ENCODE measurements at regions of chr20 and their contacts with region 1.

Region 1: GRCh38 chr20:16469395-16469905 is 103.8 kb downstream of the KIF16B start:
- DNase-seq: no peak
- H3K4me3 ChIP-seq: no peak overlapping the region
- H3K27ac ChIP-seq: no peak overlapping the region
- H3K4me1 ChIP-seq: peaks cover 1% of the 10 kb centered on the region
- H3K27me3 ChIP-seq: no peaks in the 10 kb centered on the region
- CTCF ChIP-seq: no peak
- EP300 ChIP-seq: no peak
- POLR2A ChIP-seq: no peak

Region 2: GRCh38 chr20:15848995-15849610 is 620.3 kb before region 1 on chr20:
- intact Hi-C with region 1: loop called in 1 of 4 experiments (anchors 5 kb)
- DNase-seq: no peak
- H3K4me3 ChIP-seq: no peak overlapping the region
- H3K27ac ChIP-seq: no peak overlapping the region
- H3K4me1 ChIP-seq: no peaks in the 10 kb centered on the region
- H3K27me3 ChIP-seq: no peaks in the 10 kb centered on the region
- CTCF ChIP-seq: no peak
- EP300 ChIP-seq: no peak
- POLR2A ChIP-seq: no peak

Measured in ovary (tissue), 10 donors.